ENCODE measurements at regions of chr20 and their contacts with region 1.

Region 1: GRCh38 chr20:62616728-62617621 is 25.3 kb upstream of the SLCO4A1 start:
- DNase-seq: peak; percentile 61 to 85 (median 83)
- H3K4me3 ChIP-seq: no peak overlapping the region
- H3K27ac ChIP-seq: peak overlapping the region in 3 of 5 donors; percentile 32 to 81 (median 55)
- H3K4me1 ChIP-seq: peaks cover 0 to 18% of the 10 kb centered on the region in 2 donors
- H3K27me3 ChIP-seq: no peaks in the 10 kb centered on the region
- CTCF ChIP-seq: peak; percentile 87 to 95 (median 88)
- POLR2A ChIP-seq: no peak

Region 2: DNA sequence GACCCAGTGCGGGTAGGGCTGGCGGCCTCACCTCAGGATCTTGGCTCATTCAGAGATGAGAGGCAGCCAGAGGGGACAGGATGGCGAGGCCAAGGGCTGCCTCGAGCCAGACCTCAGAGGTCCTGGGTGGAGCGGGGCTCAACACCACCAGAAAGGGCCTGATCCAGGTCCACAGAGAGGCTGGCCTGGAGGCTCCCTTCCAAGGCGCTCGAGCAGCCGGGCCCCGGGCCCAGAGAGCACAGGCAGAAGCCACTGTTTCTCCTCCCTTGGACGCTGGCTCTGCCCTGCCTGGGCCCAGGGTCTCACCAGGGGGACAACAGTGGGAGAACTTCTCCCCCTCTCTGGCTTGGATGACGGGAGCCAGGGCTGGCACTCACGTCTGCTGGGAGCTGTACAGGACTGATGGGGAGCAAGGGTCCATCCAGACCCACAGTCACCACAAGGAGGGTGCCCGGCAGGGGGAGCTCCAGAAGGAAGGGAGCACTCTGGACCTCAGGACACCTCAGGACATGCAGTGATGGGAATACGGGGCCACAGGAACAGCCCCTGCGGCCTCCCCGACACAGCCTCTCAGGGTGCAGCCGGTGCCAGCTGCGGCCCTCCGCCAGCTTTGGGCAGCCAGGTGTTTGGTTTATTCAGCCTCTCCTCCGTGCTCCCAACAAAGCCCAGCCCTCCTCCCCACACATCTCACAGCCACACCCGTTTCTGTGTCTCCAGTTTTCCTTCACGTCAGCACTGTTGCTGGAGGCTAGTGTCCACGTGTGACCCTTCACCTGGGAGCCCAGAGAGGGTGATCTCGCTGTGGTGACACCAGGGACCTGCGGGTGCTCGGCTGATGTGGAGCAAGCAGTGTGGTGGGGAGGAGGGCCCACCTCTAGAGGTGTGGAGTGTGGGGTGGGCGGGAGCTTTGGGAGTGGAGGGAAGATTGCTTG is 221.4 kb before region 1 on chr20:
- intact Hi-C with region 1: loop called in 1 of 2 experiments (anchors 10 kb)
- DNase-seq: no peak
- H3K4me3 ChIP-seq: no peak overlapping the region
- H3K27ac ChIP-seq: no peak overlapping the region
- H3K4me1 ChIP-seq: no peaks in the 10 kb centered on the region
- H3K27me3 ChIP-seq: no peaks in the 10 kb centered on the region
- CTCF ChIP-seq: no peak
- POLR2A ChIP-seq: no peak

Region 3: GRCh38 chr20:62500237-62500864 is 116.6 kb before region 1 on chr20:
- intact Hi-C with region 1: loop called (anchors 2 to 5 kb)
- DNase-seq: peak; percentile 73 to 84 (median 80)
- H3K4me3 ChIP-seq: no peak overlapping the region
- H3K27ac ChIP-seq: no peak overlapping the region
- H3K4me1 ChIP-seq: peaks cover 0 to 14% of the 10 kb centered on the region in 2 donors
- H3K27me3 ChIP-seq: no peaks in the 10 kb centered on the region
- CTCF ChIP-seq: peak; percentile 70 to 93 (median 90)
- POLR2A ChIP-seq: no peak